Activated T-helper 1 cell treated with anti-CD3 and anti-CD28 coated beads, Interleukin-12 subunit alpha, Interleukin-12 subunit beta, Interleukin-2, Interleukin-4 antibody, amounts not matched to agents 30 ng/mL and 10 ng/mL and 1 ng/mL, durations not matched to agents 14 hours and 24 hours and 36 hours (primary cell): ENCODE measurements at regions of chr9 and their contacts with region 1.

Region 1: GRCh38 chr9:127916665-127917613 is at the start of gene ST6GALNAC4:
- DNase-seq: peak; percentile 91
- H3K4me3 Mint-ChIP-seq: peak within 1 kb of the TSS; percentile 84
- H3K27ac Mint-ChIP-seq: peak within 1 kb of the TSS; percentile 89
- H3K4me1 Mint-ChIP-seq: peaks cover 57% of the 10 kb centered on the region
- H3K27me3 Mint-ChIP-seq: peaks cover 3% of the 10 kb centered on the region
- total RNA-seq, gene ST6GALNAC4: 30.8 and 31.6 TPM in 2 replicates

Region 2: DNA sequence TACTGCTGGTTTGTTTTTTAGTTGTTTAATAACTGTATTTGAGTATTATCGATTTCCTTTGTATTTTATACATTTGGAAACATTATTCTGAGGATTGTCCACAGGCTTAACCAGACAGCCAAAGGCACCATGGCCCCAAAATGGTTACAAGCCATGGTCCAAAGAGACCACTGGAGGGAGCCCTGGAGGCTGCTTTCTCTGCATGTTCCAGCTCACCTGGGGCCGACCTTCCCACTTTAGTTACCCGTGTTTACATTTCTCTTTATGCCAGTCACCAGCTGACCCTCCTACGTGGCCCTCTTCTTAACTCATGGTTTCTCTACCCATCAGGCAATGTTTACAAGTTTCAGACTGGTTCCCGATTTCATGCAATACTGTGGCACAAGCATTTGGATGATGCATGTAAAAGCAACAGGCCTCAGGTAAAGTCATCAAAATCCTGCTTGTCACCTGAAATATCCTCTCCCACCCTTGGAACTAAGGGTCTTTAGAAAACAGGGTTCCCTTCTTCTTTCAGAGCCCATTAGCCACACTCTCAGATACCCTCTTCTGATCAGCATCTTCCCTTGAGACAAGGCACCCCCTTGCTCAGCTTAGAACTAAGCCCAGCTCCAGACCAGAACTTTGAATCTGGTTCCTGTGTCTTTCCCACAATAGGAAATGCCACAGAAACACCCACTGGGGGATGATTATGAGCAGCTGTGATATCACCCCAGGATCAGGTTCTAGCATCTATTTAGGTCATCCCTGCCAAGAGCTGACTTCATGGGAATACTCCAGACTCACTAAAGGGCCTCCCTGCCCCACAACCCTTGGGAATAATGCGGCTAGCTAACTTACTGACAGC is 702.3 kb before region 1 on chr9:
- intact Hi-C with region 1: loop called (anchors 1 kb)
- DNase-seq: peak; percentile 44
- H3K4me3 Mint-ChIP-seq: no peak overlapping the region
- H3K27ac Mint-ChIP-seq: no peak overlapping the region
- H3K4me1 Mint-ChIP-seq: no peaks in the 10 kb centered on the region
- H3K27me3 Mint-ChIP-seq: peaks cover 7% of the 10 kb centered on the region

Region 3: GRCh38 chr9:127586537-127586936 is 330.4 kb before region 1 on chr9:
- intact Hi-C with region 1: loop called (anchors 1 kb)
- DNase-seq: peak; percentile 33
- H3K4me3 Mint-ChIP-seq: no peak overlapping the region
- H3K27ac Mint-ChIP-seq: no peak overlapping the region
- H3K4me1 Mint-ChIP-seq: peaks cover 11% of the 10 kb centered on the region
- H3K27me3 Mint-ChIP-seq: peaks cover 14% of the 10 kb centered on the region

Region 4: DNA sequence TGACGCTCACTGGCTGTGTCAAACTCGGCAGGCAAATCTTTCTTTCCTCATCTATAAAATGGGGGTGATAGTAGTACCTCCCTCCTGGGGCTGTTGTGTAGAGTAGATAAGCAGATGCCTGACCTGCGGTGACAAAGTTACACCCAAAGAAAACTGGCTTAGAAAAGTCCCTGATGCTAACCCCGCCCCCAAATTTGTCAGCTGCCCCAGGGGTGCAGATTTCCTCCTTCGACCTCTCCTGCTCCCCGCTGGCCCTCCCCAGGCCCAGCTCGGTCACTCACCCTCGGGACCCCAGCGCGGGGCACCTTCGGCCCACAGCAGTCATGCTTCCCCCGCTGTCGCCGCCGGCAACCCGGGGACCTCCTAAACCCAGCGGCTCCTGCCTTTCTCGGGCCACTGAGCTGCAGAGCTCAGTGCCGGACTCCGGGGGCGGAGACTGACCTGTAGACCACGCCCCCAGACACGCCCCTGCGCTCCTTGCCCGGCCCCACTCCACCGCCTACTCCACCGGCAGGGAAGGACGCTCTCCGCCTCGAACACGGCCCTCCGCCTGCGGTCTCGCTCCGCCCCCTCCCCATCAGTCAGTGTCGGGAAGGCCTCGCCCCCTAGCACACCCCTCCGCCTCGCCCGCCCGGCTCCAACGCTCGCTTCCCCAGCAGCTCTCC is 145.9 kb before region 1 on chr9:
- intact Hi-C with region 1: loop called (anchors 1 kb)
- DNase-seq: peak; percentile 99
- H3K4me3 Mint-ChIP-seq: peak overlapping the region; percentile 86
- H3K27ac Mint-ChIP-seq: peak overlapping the region; percentile 90
- H3K4me1 Mint-ChIP-seq: peaks cover 63% of the 10 kb centered on the region
- H3K27me3 Mint-ChIP-seq: no peaks in the 10 kb centered on the region

Region 5: DNA sequence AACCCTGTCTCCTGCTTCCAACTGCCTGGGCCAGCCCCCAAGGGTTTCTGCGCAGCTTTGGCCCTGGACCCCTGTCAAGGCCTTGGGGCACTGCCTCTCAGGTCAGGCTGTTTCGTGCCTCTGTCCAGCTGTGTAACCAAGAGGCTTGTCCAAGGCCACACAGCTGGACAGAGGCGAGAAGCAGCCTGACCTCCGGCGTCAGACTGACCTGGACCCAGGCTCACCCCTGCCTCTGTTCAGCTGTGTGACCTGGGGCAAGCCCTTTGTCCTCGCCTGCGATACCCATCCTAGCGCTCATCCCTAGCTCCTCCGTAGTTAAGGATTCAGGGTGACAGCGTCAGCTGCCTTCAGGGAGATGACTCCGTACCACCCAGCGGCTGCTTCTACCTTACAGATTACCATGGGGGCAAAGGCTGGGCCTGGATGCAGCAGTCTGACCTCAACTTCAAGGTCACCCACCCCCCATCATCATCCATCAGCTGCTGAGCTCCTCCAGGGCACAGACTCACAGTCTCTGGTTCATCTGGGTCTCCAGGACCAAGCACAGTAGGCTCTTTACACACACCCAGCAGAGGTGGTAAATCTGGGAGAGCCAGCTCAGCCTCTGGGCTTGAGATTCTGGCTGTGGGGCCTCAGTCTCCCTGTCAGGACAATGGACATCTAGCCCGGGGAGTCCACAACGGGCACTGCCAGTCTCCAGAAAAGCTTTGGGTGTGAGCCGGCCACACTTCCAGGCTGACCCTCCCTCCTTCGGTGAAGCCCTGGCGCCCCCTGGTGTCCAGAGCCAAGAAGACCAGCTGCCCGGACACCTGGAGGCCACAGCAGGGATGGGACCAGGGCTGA is 47.4 kb before region 1 on chr9:
- intact Hi-C with region 1: loop called (anchors 1 kb)
- DNase-seq: peak; percentile 69
- H3K4me3 Mint-ChIP-seq: no peak overlapping the region
- H3K27ac Mint-ChIP-seq: no peak overlapping the region
- H3K4me1 Mint-ChIP-seq: peaks cover 12% of the 10 kb centered on the region
- H3K27me3 Mint-ChIP-seq: no peaks in the 10 kb centered on the region

Region 6: DNA sequence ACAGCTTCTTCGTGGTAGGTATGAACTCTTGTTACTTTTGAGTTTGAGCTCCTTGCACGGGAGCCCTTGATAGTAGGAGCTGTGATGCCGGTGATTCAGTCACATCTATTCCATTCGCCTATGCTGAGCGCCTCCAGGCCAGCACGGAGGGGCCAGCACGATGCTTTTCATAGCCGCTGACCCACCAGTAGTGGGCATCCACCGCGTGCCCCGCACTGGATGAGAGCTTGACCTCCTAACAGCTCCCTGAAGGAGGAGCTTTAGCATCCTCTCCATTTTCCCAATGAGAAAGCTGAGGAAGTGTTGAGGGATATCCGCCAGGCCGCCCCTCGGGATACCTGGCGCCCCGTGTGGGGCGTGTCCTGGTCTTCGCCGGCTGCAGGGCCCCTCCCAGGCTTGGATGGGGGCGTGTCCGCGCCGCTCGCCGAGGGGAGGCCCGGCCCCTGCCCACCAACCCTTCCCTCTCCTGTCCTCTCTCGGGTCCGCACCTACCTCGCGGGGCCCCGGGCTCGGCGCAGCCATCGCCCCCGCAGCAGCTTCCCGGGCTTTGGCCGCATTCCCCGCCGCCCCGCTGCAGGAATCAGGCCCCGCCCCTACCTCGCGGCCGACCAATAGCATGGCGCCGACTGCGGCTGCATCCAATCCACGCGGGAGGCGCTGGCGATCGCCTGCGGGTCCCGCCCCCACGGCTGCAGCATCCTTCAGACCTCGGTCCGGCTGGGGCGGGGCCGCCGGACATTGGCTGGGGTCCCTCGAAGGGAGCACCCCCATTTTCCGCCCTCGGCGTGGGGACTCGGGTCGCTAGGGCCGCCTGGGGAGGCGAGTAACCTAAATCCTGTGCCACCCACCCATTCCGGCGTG is 13.5 kb after region 1 on chr9 and contains the start of gene PIP5KL1:
- intact Hi-C with region 1: loop called (anchors 1 kb)
- DNase-seq: peak; percentile 74
- H3K4me3 Mint-ChIP-seq: peak within 1 kb of the TSS; percentile 68
- H3K27ac Mint-ChIP-seq: peak within 1 kb of the TSS; percentile 36
- H3K4me1 Mint-ChIP-seq: peaks cover 31% of the 10 kb centered on the region
- H3K27me3 Mint-ChIP-seq: peaks cover 9% of the 10 kb centered on the region
- total RNA-seq, gene PIP5KL1: 1.1 and 1.2 TPM in 2 replicates